Activated CD8-positive, alpha-beta memory T cell treated with anti-CD3 and anti-CD28 coated beads, Interleukin-2, amount 10 ng/mL, durations not matched to agents 7 days and 5 days (primary cell): ENCODE measurements at regions of chr9 and their contacts with region 1.

Region 1: GRCh38 chr9:122099271-122099869 is 6.3 kb upstream of the TTLL11 start:
- DNase-seq: peak; percentile 83
- ATAC-seq: peak; percentile 78
- H3K4me3 Mint-ChIP-seq: no peak overlapping the region
- H3K27ac Mint-ChIP-seq: no peak overlapping the region
- H3K4me1 Mint-ChIP-seq: peaks cover 11% of the 10 kb centered on the region
- H3K27me3 Mint-ChIP-seq: peaks cover 30% of the 10 kb centered on the region

Region 2: DNA sequence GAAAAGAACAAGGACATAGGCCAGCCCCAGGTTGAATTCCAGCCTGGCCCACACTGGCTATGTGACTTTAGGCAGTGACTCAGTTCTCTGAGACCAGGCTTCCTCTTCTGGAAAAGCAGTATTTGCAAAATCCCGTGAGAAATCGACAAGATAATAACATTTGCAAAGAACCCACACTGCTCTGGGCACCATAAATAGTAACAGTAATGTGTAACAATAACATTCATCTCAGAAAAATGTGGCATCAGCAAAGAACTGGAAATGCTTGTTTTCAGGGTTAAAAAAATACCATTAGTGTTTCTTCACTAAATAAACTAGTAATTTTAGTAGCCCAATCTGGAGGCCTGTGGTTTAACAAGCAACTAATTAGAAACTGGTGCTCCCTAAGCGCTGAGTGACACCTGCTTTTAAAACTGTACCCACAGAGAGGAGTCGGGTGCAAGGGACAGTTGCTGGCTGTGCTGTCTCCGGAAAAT is 154.6 kb before region 1 on chr9:
- CTCF ChIA-PET with region 1: no interaction called
- DNase-seq: no peak
- ATAC-seq: no peak
- H3K4me3 Mint-ChIP-seq: no peak overlapping the region
- H3K27ac Mint-ChIP-seq: no peak overlapping the region
- H3K4me1 Mint-ChIP-seq: no peaks in the 10 kb centered on the region
- H3K27me3 Mint-ChIP-seq: no peaks in the 10 kb centered on the region

Region 3: GRCh38 chr9:122087406-122088200 is 11.8 kb before region 1 on chr9:
- CTCF ChIA-PET with region 1: interaction called, 17 read pairs
- DNase-seq: no peak
- ATAC-seq: no peak
- H3K4me3 Mint-ChIP-seq: no peak overlapping the region
- H3K27ac Mint-ChIP-seq: no peak overlapping the region
- H3K4me1 Mint-ChIP-seq: peaks cover 10% of the 10 kb centered on the region
- H3K27me3 Mint-ChIP-seq: no peaks in the 10 kb centered on the region

Region 4: DNA sequence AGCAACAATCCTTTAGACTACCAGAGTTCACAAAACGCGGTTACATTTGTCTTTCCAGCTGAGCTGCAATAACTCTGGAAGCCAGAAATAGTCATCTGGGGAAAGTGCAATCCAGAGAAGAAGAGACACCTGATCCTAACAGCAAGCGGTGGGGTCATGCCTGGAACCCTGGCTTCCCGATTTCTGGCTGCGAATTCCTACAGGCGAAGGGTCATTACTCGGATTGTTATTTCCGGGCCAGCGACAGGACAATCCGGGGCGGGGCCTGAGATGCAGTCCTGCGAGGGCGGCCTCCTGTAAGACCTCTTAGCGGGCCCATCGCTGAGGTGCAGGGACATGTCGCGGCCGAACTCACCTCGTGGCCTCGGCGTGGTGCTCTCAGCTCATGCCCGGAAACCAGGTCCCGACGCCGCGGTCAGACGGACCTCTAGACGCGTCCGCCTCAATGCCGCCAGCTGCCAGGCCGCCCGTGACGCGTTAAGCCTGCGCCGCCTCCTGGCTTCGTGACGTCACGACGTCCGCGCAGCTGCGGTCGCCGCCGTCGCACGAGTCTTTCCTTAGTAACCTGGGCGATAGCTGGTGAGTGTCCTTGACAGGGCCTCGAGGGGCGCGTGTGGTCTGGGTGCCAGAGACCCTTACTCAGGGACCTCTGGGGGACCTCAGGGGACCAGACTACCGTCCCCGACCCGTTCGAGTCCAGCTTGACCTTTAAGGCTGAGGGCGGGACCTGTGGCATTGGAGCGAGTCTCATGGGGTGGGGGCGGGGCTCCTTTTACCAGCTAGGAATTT is 165.2 kb after region 1 on chr9 and contains the starts of genes MRRF and RBM18:
- CTCF ChIA-PET with region 1: interaction called, 17 read pairs
- DNase-seq: peak; percentile 94
- ATAC-seq: peak; percentile 86
- H3K4me3 Mint-ChIP-seq: peak within 1 kb of the TSS; percentile 98
- H3K27ac Mint-ChIP-seq: peak within 1 kb of the TSS; percentile 100
- H3K4me1 Mint-ChIP-seq: peaks cover 47% of the 10 kb centered on the region
- H3K27me3 Mint-ChIP-seq: no peaks in the 10 kb centered on the region
- total RNA-seq, gene MRRF: 27.9 to 39.5 TPM
- total RNA-seq, gene RBM18: 23.8 to 24.4 TPM

Region 5: DNA sequence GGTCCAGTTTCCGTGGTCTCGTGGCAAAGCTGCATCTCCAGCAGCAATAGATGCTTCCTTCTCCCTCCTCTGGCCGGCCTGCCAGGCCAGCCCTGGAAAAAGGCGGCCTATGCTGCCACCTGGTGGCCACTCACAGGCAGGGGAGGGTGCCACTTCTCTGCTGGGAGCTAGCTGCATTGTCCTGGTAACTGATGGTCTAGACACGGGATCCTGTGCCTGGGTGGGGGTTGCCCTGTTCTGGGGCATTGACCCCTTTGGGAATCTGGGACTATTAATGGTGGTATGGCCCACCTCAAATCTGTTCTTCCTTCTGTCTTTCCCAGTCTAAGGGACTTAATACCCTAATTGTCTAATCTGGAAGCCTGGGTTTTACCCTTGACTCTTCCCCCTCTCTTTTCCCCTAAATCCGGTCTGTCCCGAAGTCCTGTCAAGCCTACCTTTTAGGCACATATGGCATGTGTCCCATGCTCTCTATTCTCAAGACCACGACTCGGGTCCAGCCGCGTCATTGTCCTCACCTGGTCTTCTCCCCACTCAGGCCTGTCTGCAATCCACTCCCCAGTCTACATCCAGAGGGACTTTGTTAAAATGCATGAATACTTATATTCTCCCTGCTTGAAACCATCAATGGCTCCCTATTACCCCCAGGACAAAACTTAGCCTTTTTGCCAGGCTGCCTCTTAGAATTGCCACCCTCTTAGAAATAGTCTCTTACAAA is 251.4 kb after region 1 on chr9:
- CTCF ChIA-PET with region 1: interaction called, 143 read pairs
- DNase-seq: peak; percentile 86
- ATAC-seq: peak; percentile 88
- H3K4me3 Mint-ChIP-seq: no peak overlapping the region
- H3K27ac Mint-ChIP-seq: no peak overlapping the region
- H3K4me1 Mint-ChIP-seq: peaks cover 26% of the 10 kb centered on the region
- H3K27me3 Mint-ChIP-seq: peaks cover 25% of the 10 kb centered on the region